ENCODE measurements at regions of chr3 and their contacts with region 1.

Region 1: GRCh38 chr3:139937674-139938279 is 2.8 kb downstream of the CLSTN2 start:
- DNase-seq: no peak
- H3K4me3 ChIP-seq: no peak overlapping the region
- CTCF ChIP-seq: peak; percentile 62

Region 2: GRCh38 chr3:139948898-139949297 is 11.1 kb after region 1 on chr3:
- CTCF ChIA-PET with region 1: interaction called, 11 read pairs
- POLR2A ChIA-PET with region 1: no interaction called
- DNase-seq: no peak
- H3K4me3 ChIP-seq: no peak overlapping the region
- CTCF ChIP-seq: no peak

Measured in AG04449 (cell line).